ENCODE measurements at regions of chr4 and their contacts with region 1.

Region 1: DNA sequence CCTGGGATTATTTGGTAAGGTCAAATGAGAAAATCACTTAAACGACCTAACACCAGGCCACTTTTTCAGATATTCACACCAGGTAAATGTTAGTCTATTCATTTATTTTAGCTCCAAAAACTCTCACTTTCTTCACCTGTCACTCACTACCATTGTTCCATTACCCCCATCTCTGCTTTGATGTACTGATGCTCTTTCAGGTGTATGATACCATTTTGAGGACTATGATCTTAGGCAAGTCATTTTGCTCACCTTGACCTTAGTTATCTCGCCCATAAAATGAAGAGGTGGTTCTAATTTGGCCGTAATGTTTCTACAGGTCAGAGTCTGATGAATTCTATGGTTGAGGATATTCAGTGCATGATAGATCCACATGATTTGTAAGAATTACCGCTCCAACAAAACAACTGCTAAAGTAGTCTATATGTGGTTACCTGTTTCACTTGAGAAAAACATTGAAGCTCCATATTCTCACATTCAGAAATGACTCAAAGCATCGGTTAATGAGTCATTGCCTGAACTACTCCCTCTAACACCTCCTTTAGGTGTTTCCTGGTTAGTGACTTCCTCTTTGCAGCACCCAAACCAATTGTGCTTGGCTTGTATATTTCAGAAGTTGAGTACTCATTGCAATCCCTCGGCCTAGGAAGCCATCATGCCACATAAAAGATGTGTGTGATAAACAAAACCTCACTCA is 4.5 kb downstream of the DTHD1 start:
- DNase-seq: peak; percentile 93
- ATAC-seq: peak; percentile 99
- H3K4me3 ChIP-seq: peak overlapping the region; percentile 38
- H3K27ac ChIP-seq: peak overlapping the region; percentile 54
- H3K4me1 ChIP-seq: peaks cover 7% of the 10 kb centered on the region; the same call in 1 of the 2 replicates
- H3K27me3 ChIP-seq: no peaks in the 10 kb centered on the region
- CTCF ChIP-seq: no peak
- EP300 ChIP-seq: peak; percentile 90 to 98
- POLR2A ChIP-seq: no peak
- RAD21 ChIP-seq: peak; percentile 42

Region 2: DNA sequence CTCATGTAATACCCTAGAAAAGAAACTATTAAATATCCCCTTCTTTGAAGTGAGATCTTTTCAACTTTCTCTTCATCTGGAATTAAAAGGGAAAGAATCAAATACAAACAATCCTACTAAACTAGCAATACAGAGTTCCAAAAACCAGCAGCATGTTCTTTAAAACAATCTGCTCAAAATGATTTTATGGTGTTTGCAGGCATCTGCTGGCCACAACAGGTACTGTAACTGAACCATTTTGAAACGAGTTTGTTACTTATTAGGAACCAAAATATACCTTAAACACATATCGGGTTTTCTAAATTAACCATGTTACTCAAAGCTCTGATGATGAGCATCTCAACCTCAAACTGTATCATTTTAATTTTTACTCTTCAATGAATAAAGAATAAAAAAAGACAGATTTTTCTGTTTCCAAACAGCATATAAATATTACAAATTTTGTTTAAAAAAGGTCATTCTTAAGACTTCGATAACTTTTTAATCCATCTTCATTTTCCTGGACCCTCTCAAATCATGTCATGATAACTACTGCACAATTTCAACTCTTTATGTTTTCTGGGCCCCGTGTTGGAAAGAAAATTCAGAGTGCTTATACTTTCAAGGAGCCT is 98.1 kb before region 1 on chr4:
- CTCF ChIA-PET with region 1: no interaction called
- POLR2A ChIA-PET with region 1: no interaction called
- RAD21 ChIA-PET with region 1: no interaction called
- SMC1A ChIA-PET with region 1: interaction called, 10 read pairs
- in situ Hi-C with region 1: no loop called
- intact Hi-C with region 1: no loop called
- DNase-seq: no peak
- ATAC-seq: peak; percentile 27; the same call in 1 of the 3 replicates
- H3K4me3 ChIP-seq: no peak overlapping the region
- H3K27ac ChIP-seq: no peak overlapping the region
- H3K4me1 ChIP-seq: peaks cover 6% of the 10 kb centered on the region
- H3K27me3 ChIP-seq: no peaks in the 10 kb centered on the region
- CTCF ChIP-seq: peak; percentile 54 to 70 (median 65)
- EP300 ChIP-seq: no peak
- POLR2A ChIP-seq: no peak
- RAD21 ChIP-seq: peak; percentile 70

Region 3: GRCh38 chr4:36269101-36269500 is 16.8 kb before region 1 on chr4:
- CTCF ChIA-PET with region 1: interaction called, 6 read pairs
- POLR2A ChIA-PET with region 1: no interaction called
- RAD21 ChIA-PET with region 1: interaction called, 5 read pairs
- SMC1A ChIA-PET with region 1: interaction called, 18 read pairs
- in situ Hi-C with region 1: no loop called
- intact Hi-C with region 1: no loop called
- DNase-seq: no peak
- ATAC-seq: peak; percentile 84
- H3K4me3 ChIP-seq: no peak overlapping the region
- H3K27ac ChIP-seq: no peak overlapping the region
- H3K4me1 ChIP-seq: no peaks in the 10 kb centered on the region
- H3K27me3 ChIP-seq: no peaks in the 10 kb centered on the region
- CTCF ChIP-seq: no peak
- EP300 ChIP-seq: no peak
- POLR2A ChIP-seq: no peak
- RAD21 ChIP-seq: no peak

Region 4: GRCh38 chr4:36320117-36320896 is 34.4 kb after region 1 on chr4:
- CTCF ChIA-PET with region 1: interaction called, 3 read pairs
- POLR2A ChIA-PET with region 1: interaction called, 8 read pairs
- RAD21 ChIA-PET with region 1: interaction called, 3 read pairs
- SMC1A ChIA-PET with region 1: interaction called, 11 read pairs
- in situ Hi-C with region 1: no loop called
- intact Hi-C with region 1: loop called (anchors 1 kb)
- DNase-seq: peak; percentile 54
- ATAC-seq: peak; percentile 78
- H3K4me3 ChIP-seq: no peak overlapping the region; the same call in 1 of the 2 replicates
- H3K27ac ChIP-seq: peak overlapping the region; percentile 79
- H3K4me1 ChIP-seq: peaks cover 52% of the 10 kb centered on the region
- H3K27me3 ChIP-seq: no peaks in the 10 kb centered on the region
- CTCF ChIP-seq: no peak
- EP300 ChIP-seq: peak in 1 of 2 experiments; percentile 39; a peak in 1 of 4 replicates
- POLR2A ChIP-seq: no peak
- RAD21 ChIP-seq: peak; percentile 29; the same call in 1 of the 2 replicates

Region 5: GRCh38 chr4:36332023-36332781 is 46.3 kb after region 1 on chr4:
- CTCF ChIA-PET with region 1: interaction called, 4 read pairs
- POLR2A ChIA-PET with region 1: no interaction called
- RAD21 ChIA-PET with region 1: interaction called, 6 read pairs
- SMC1A ChIA-PET with region 1: interaction called, 12 read pairs
- in situ Hi-C with region 1: no loop called
- intact Hi-C with region 1: no loop called
- DNase-seq: peak; percentile 61
- ATAC-seq: peak; percentile 89
- H3K4me3 ChIP-seq: peak overlapping the region; percentile 41; the same call in 1 of the 2 replicates
- H3K27ac ChIP-seq: peak overlapping the region; percentile 91
- H3K4me1 ChIP-seq: peaks cover 22% of the 10 kb centered on the region
- H3K27me3 ChIP-seq: no peaks in the 10 kb centered on the region
- CTCF ChIP-seq: no peak
- EP300 ChIP-seq: no peak
- POLR2A ChIP-seq: peak; percentile 78
- RAD21 ChIP-seq: no peak